Aorta (tissue), 5 donors: ENCODE measurements at regions of chr1 and their contacts with region 1.

Region 1: GRCh38 chr1:113456967-113457366 is 66.7 kb downstream of the MAGI3 start:
- DNase-seq: peak in 1 of 2 donors; percentile 53
- ATAC-seq: peak; percentile 90
- H3K4me3 ChIP-seq: no peak overlapping the region
- H3K27ac ChIP-seq: no peak overlapping the region
- H3K4me1 ChIP-seq: no peaks in the 10 kb centered on the region
- H3K27me3 ChIP-seq: no peaks in the 10 kb centered on the region

Region 2: DNA sequence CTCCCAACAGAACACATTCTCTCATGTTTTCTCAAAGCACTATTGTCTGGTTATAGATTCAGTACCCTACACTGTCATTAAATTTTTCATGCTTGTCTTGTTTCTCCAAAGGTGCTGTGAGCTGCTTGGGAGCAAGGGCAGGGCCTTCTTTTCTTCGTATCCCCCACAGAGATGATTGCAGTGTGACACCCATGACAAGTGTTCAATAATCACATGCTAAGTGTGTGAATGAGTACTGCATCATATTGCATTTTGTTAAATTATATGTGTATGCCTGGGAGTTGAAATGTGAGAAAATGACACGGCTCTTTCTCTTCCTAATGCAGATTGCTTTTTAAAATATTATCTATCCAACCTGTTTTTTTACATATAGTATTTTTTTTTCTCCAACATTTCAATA is 123.9 kb before region 1 on chr1:
- intact Hi-C with region 1: no loop called
- DNase-seq: no peak
- ATAC-seq: no peak
- H3K4me3 ChIP-seq: no peak overlapping the region
- H3K27ac ChIP-seq: no peak overlapping the region
- H3K4me1 ChIP-seq: no peaks in the 10 kb centered on the region
- H3K27me3 ChIP-seq: no peaks in the 10 kb centered on the region

Region 3: GRCh38 chr1:113389953-113390834 is 66.8 kb before region 1 on chr1 and contains the start of gene MAGI3:
- intact Hi-C with region 1: loop called (anchors 2 kb)
- DNase-seq: peak; percentile 98 to 99
- ATAC-seq: peak; percentile 98
- H3K4me3 ChIP-seq: peak within 1 kb of the TSS; percentile 95 to 97
- H3K27ac ChIP-seq: peak within 1 kb of the TSS in 1 of 2 donors; percentile 76
- H3K4me1 ChIP-seq: no peaks in the 10 kb centered on the region
- H3K27me3 ChIP-seq: no peaks in the 10 kb centered on the region
- total RNA-seq, gene MAGI3: 15.0 to 21.7 TPM